K562 (cell line): ENCODE measurements at regions of chr6 and their contacts with region 1.

Region 1: GRCh38 chr6:44110005-44110686 is 17.1 kb downstream of the MRPL14 start:
- DNase-seq: no peak
- ATAC-seq: no peak
- H3K4me3 ChIP-seq: no peak overlapping the region
- H3K27ac ChIP-seq: no peak overlapping the region; the same call in 2 of the 3 replicates
- H3K4me1 ChIP-seq: peaks cover 0 to 3% of the 10 kb centered on the region in 2 experiments; a peak in 2 of 5 replicates
- H3K27me3 ChIP-seq: no peaks in the 10 kb centered on the region
- CTCF ChIP-seq: no peak
- EP300 ChIP-seq: no peak
- POLR2A ChIP-seq: no peak
- RAD21 ChIP-seq: no peak

Region 2: GRCh38 chr6:44127186-44128019 is 17.3 kb after region 1 on chr6 and contains the starts of genes MRPL14 and TMEM63B:
- CTCF ChIA-PET with region 1: interaction called, 3 read pairs
- POLR2A ChIA-PET with region 1: interaction called, 14 read pairs
- in situ Hi-C with region 1: no loop called
- intact Hi-C with region 1: no loop called
- DNase-seq: peak; percentile 94 to 99 (median 99)
- ATAC-seq: peak; percentile 85
- H3K4me3 ChIP-seq: peak within 1 kb of the TSS; percentile 76
- H3K27ac ChIP-seq: peak within 1 kb of the TSS; percentile 75
- H3K4me1 ChIP-seq: peaks cover 51 to 64% of the 10 kb centered on the region in 2 experiments
- H3K27me3 ChIP-seq: no peaks in the 10 kb centered on the region
- CTCF ChIP-seq: no peak
- EP300 ChIP-seq: no peak
- POLR2A ChIP-seq: peak; percentile 89
- RAD21 ChIP-seq: no peak
- polyA plus RNA-seq, gene MRPL14: 414 to 424 TPM
- polyA plus RNA-seq, gene TMEM63B: 0.14 to 0.17 TPM

Region 3: DNA sequence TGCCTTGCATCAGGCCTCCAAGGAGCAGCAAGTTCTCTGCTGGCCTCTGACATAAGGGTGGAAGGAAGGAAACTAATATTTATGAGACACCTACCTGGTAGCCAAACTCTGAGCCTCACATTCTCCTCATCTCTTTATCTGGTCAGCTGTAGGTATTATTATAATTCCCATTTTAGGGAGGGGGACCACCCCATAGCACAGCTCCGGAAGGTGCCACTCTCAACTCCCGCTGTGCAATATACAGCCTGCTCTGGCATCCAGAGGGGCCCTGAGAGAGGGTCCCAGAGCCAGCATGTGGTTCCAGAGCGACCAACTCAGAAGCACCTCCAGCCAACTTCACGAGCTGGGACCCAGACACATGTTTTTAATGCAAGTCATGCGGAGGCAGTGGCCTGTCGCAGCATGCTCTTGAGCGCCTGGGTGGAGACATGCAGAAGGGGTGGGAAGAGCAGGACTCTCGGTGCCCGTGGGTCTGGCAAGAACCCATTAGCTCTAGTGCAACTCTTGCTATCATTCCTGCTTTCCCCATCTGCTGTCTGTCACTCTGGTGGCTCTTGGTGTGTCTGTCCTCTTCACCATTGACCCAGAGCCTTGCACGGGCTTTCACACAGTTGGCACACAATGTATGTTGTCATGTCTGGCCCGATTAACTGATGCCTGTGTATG is 91.6 kb after region 1 on chr6:
- CTCF ChIA-PET with region 1: no interaction called
- POLR2A ChIA-PET with region 1: no interaction called
- in situ Hi-C with region 1: no loop called
- intact Hi-C with region 1: no loop called
- DNase-seq: peak; percentile 71 to 79 (median 73)
- ATAC-seq: peak; percentile 78
- H3K4me3 ChIP-seq: no peak overlapping the region
- H3K27ac ChIP-seq: peak overlapping the region; percentile 53; the same call in 2 of the 3 replicates
- H3K4me1 ChIP-seq: peaks cover 28 to 45% of the 10 kb centered on the region in 2 experiments
- H3K27me3 ChIP-seq: no peaks in the 10 kb centered on the region
- CTCF ChIP-seq: no peak
- EP300 ChIP-seq: no peak; the same call in 1 of the 2 replicates
- POLR2A ChIP-seq: 0 out of 2 replicates have a peak, but pooled peaks have one; percentile 39
- RAD21 ChIP-seq: no peak

Region 4: GRCh38 chr6:44494011-44494501 is 383.9 kb after region 1 on chr6:
- CTCF ChIA-PET with region 1: no interaction called
- POLR2A ChIA-PET with region 1: no interaction called
- in situ Hi-C with region 1: no loop called
- intact Hi-C with region 1: no loop called
- DNase-seq: peak; percentile 39 to 75 (median 64)
- ATAC-seq: peak; percentile 95
- H3K4me3 ChIP-seq: no peak overlapping the region
- H3K27ac ChIP-seq: no peak overlapping the region
- H3K4me1 ChIP-seq: no peaks in the 10 kb centered on the region; a peak in 1 of 5 replicates
- H3K27me3 ChIP-seq: peaks cover 37 to 53% of the 10 kb centered on the region in 2 experiments
- CTCF ChIP-seq: peak; percentile 76 to 92 (median 83)
- EP300 ChIP-seq: no peak
- POLR2A ChIP-seq: no peak
- RAD21 ChIP-seq: peak; percentile 61 to 78